Ascending aorta (tissue), 2 donors: ENCODE measurements at regions of chr12 and their contacts with region 1.

Region 1: DNA sequence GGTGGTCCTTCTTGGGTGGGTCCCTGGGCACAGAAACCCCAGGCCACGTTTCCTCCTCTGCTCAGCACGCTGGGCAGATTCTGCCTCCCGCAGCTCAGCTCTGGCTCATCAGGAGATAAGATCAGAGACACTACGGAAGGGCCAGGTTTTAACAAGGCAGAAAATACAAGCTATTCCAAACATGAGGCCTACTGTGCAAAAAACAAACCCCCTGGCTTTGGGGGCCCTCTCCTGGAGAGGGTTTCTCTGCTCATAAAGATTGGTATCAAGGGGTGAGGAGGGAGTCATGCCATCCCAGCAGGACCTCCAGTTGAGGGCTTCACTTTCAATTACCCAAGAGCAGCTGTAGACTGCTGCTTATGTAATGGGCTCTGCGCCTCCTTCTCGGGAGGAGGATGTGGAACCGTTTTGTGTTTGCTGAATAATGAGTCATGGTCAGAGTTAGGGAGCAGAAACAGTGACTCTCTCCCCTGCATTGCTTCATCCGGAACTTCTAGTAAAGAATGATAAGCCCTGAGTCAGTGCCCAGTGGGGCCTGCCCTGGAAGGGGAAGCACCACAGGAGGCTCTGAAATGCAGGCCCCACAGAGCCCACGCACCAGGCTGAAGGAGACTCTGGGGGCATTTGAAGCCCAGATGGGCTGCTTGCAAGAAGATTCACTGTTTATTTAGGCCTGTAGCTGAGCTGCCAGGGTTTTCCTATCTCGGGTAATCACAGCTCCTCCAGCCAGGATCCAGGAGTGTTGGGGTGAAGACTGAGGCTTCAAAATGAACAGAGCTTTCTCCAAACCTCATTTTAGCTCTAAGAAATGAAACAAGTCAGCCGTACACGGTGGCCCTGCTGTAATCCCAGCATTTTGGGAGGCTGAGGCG is 79.3 kb downstream of the SSPN start:
- DNase-seq: peak; percentile 78 to 96
- H3K4me3 ChIP-seq: no peak overlapping the region
- H3K27ac ChIP-seq: peak overlapping the region; percentile 80 to 84
- H3K4me1 ChIP-seq: peaks cover 6 to 30% of the 10 kb centered on the region in 2 donors
- H3K27me3 ChIP-seq: no peaks in the 10 kb centered on the region
- CTCF ChIP-seq: no peak

Region 2: GRCh38 chr12:26153421-26154154 is 121.1 kb before region 1 on chr12:
- intact Hi-C with region 1: loop called (anchors 5 kb)
- DNase-seq: peak in 1 of 2 donors; percentile 74
- H3K4me3 ChIP-seq: no peak overlapping the region
- H3K27ac ChIP-seq: peak overlapping the region; percentile 75 to 78
- H3K4me1 ChIP-seq: peaks cover 3 to 36% of the 10 kb centered on the region in 2 donors
- H3K27me3 ChIP-seq: no peaks in the 10 kb centered on the region
- CTCF ChIP-seq: peak; percentile 6 to 38 (median 28)

Region 3: DNA sequence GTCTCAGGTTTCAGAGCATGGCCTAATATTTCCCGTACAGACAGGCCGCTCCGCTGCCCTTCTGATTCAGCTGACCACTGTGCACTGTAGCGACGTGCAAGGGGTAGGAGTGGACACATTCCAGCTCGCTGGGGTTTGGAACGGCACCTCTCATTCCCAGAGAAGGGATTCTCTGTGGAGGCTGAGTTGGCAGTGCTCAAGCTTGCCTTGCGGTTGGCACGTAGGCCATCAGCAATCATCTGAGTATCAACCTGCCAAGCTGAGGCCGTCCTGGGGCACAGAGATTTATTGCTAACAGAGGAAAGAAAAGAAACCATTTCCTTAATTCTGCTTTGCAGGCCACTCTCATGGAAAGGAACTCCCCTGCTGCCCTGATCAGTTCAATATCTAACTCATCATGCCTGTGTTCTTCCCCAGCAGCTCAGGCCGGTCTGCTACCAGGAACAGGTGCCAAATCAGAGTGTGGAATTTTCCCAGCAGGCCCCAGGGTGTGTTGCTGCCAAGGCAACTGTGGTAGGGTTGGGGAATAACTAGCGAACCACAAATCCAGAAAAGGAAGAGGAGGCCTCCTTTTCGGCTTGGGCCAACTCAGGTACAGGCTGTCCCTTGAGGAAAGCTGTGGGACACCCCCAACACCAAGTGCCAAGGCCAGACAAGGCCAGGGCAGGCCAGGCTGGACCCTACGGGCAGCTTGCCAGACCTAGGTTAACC is 13.1 kb after region 1 on chr12:
- intact Hi-C with region 1: no loop called
- DNase-seq: peak in 1 of 2 donors; percentile 77
- H3K4me3 ChIP-seq: peak overlapping the region in 1 of 2 donors; percentile 17
- H3K27ac ChIP-seq: peak overlapping the region; percentile 87 to 93
- H3K4me1 ChIP-seq: peaks cover 7 to 15% of the 10 kb centered on the region in 2 donors
- H3K27me3 ChIP-seq: no peaks in the 10 kb centered on the region
- CTCF ChIP-seq: no peak